Activated naive CD4-positive, alpha-beta T cell treated with anti-CD3 and anti-CD28 coated beads, Interleukin-2, amount 10 ng/mL, durations not matched to agents 7 days and 5 days (primary cell): ENCODE measurements at regions of chr12 and their contacts with region 1.

Region 1: GRCh38 chr12:39619660-39620433 is at the start of gene ABCD2:
- DNase-seq: peak; percentile 86
- H3K4me3 Mint-ChIP-seq: no peak within 1 kb of the TSS
- H3K27ac Mint-ChIP-seq: no peak within 1 kb of the TSS
- H3K4me1 Mint-ChIP-seq: peaks cover 31% of the 10 kb centered on the region
- H3K27me3 Mint-ChIP-seq: no peaks in the 10 kb centered on the region

Region 2: DNA sequence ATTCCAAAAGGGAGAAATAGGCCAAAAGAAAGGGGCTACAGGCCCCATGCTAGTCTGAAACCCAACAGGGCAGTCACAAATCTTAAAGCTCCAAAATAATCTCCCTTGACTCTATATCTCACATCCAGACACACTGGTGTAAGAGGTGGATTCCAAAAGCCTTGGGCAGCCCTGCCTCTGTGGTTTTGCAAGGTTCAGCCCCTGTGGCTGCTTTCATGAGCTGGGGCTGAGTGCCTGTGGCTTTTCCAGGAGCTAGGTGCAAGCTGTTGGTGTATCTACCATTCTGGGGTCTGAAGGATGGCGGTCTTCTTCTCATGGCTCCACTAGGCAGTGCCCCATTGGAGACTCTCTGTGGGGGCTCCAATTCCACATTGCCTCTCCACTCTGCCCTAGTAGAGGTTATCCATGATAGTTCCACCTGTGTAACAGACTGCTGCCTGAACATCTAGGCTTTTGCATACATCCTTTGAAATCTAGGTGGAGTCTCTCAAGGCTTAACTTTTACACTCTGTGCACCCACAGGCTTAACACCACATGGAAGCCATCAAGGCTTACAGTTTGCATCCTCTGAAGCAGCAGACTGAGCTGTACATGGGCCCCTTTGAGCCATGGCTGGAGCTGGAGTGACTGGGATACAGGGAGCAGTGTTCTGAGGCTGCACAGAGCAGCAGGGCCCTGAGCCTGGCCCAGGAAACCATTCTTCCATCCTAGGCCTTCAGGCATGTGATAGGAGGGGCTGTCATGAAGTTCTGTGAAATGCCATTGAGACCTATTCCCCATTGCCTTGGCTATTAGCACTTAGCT is 66.2 kb after region 1 on chr12:
- CTCF ChIA-PET with region 1: interaction called, 15 read pairs
- DNase-seq: peak; percentile 85
- H3K4me3 Mint-ChIP-seq: peak overlapping the region; percentile 53
- H3K27ac Mint-ChIP-seq: peak overlapping the region; percentile 96
- H3K4me1 Mint-ChIP-seq: peaks cover 18% of the 10 kb centered on the region
- H3K27me3 Mint-ChIP-seq: no peaks in the 10 kb centered on the region

Region 3: DNA sequence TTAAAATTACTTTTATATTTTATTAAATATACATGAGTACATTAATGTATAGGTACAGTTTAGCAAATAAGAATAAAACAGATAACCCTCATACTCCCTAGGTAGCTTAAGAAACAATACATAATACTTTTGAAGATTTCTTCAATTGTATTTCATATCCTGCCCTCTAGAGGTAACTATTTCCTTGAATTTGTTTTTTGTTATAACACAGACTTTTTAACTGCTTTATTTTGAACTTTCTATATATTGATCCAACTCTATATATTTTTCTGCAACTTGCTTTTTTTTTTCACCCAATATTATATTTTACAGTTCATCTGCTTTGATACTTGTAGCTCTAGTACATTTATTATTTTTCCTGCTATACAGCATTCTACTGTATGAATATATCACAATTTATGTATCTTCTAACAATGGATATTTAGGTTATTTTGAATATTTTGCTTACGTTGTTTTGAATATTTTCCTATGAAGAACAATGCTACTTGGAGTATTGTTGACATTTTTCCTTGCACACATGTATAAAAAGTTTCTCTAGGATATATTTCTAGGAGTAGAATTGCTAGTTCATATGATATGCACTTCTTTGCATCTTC is 72.5 kb after region 1 on chr12:
- CTCF ChIA-PET with region 1: interaction called, 13 read pairs
- DNase-seq: no peak
- H3K4me3 Mint-ChIP-seq: no peak overlapping the region
- H3K27ac Mint-ChIP-seq: no peak overlapping the region
- H3K4me1 Mint-ChIP-seq: peaks cover 10% of the 10 kb centered on the region
- H3K27me3 Mint-ChIP-seq: peaks cover 11% of the 10 kb centered on the region